CD8-positive, alpha-beta memory T cell (primary cell): ENCODE measurements at regions of chr9 and their contacts with region 1.

Region 1: DNA sequence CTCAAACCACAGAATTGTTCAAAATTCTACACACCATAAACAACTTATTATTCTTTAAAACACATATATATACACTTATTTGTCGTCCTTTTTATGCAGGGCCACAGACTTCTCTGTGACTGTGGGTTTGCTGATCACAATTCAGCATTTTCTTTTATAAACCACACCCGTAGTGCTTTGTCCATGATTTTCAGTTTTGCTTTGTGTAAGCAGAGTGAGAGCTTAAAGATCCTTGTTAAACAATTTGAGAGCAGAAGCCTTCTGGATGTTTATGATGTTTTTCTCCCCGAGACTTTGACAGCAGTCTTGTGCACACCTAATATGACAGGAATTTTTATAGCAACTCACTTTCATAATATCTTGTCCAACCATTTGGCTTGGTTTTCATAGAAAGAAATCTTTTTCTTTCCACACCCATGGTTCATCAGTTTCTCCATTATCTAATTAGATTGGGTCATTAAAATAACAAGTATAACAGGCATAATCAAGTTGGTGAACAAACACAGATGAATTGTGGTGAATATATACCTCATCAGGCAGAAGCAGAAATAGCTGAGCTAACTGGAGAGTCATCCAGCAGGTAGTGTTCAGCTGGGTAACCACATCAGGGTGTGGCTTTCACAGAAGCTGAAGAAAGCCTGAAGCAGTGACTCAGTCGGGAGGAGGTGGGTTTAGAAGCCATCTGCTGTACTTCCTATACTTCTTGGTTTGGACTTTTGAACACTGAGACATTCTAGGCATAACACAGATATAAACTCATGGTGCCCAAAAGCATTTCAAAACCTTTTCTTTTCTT is 232.8 kb downstream of the DOCK8 start:
- DNase-seq: peak; percentile 17 to 83 (median 34)
- H3K4me3 ChIP-seq: no peak overlapping the region
- H3K4me3 Mint-ChIP-seq: peak overlapping the region in 5 of 7 donors; percentile 9 to 50 (median 12)
- H3K27ac ChIP-seq: no peak overlapping the region
- H3K27ac Mint-ChIP-seq: peak overlapping the region; percentile 4 to 97 (median 65)
- H3K4me1 ChIP-seq: peaks cover 8% of the 10 kb centered on the region
- H3K4me1 Mint-ChIP-seq: peaks cover 23 to 37% (median 23%) of the 10 kb centered on the region in 3 donors
- H3K27me3 ChIP-seq: no peaks in the 10 kb centered on the region
- H3K27me3 Mint-ChIP-seq: peaks cover 0 to 1% of the 10 kb centered on the region in 2 donors

Region 2: GRCh38 chr9:459491-460444 is 12.3 kb after region 1 on chr9:
- CTCF ChIA-PET with region 1: interaction called, 10 read pairs
- POLR2A ChIA-PET with region 1: no interaction called
- DNase-seq: peak in 1 of 5 donors; percentile 11
- H3K4me3 ChIP-seq: no peak overlapping the region
- H3K4me3 Mint-ChIP-seq: peak overlapping the region in 2 of 7 donors; percentile 0 to 74
- H3K27ac ChIP-seq: peak overlapping the region; percentile 2
- H3K27ac Mint-ChIP-seq: peak overlapping the region in 7 of 8 donors; percentile 34 to 90 (median 71)
- H3K4me1 ChIP-seq: peaks cover 4% of the 10 kb centered on the region
- H3K4me1 Mint-ChIP-seq: peaks cover 17 to 37% (median 32%) of the 10 kb centered on the region in 3 donors
- H3K27me3 ChIP-seq: no peaks in the 10 kb centered on the region
- H3K27me3 Mint-ChIP-seq: no peaks in the 10 kb centered on the region